ENCODE measurements at regions of chr3 and their contacts with region 1.

Region 1: GRCh38 chr3:11297126-11297525 is 24.9 kb downstream of the ATG7 start:
- DNase-seq: no peak
- H3K4me3 ChIP-seq: no peak overlapping the region
- H3K4me3 Mint-ChIP-seq: no peak overlapping the region
- H3K27ac ChIP-seq: peak overlapping the region in 1 of 2 donors; percentile 52
- H3K27ac Mint-ChIP-seq: peak overlapping the region in 5 of 7 donors; percentile 54 to 78 (median 64)
- H3K4me1 ChIP-seq: peaks cover 4 to 6% of the 10 kb centered on the region in 2 donors
- H3K4me1 Mint-ChIP-seq: peaks cover 17% of the 10 kb centered on the region
- H3K27me3 ChIP-seq: no peaks in the 10 kb centered on the region
- H3K27me3 Mint-ChIP-seq: peaks cover 0 to 3% (median 0%) of the 10 kb centered on the region in 3 donors
- CTCF ChIP-seq: no peak

Region 2: DNA sequence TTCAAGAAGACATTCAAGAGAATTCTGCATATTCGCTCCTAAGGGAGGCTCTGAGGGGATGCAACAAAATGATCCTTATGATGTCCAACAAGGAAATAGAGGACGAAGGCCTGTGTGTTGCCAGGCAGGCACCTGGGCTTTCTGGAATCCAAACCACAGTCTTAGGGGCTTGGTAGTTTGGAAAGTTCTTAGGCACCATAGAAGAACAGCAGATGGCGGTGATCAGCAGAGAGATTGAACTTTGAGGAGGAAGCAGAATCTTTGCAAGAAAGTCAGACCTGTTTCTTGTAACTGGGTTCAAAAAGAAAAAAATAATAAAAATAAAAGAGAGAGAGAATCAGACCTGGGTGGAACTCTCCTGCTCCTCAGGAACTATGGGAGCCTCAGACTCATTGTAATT is 36.7 kb before region 1 on chr3:
- intact Hi-C with region 1: loop called in 1 of 2 experiments (anchors 5 kb)
- DNase-seq: peak in 2 of 3 donors; percentile 14 to 26
- H3K4me3 ChIP-seq: no peak overlapping the region
- H3K4me3 Mint-ChIP-seq: no peak overlapping the region
- H3K27ac ChIP-seq: no peak overlapping the region
- H3K27ac Mint-ChIP-seq: no peak overlapping the region
- H3K4me1 ChIP-seq: no peaks in the 10 kb centered on the region
- H3K4me1 Mint-ChIP-seq: no peaks in the 10 kb centered on the region
- H3K27me3 ChIP-seq: no peaks in the 10 kb centered on the region
- H3K27me3 Mint-ChIP-seq: peaks cover 0 to 6% (median 5%) of the 10 kb centered on the region in 3 donors
- CTCF ChIP-seq: no peak

Measured in CD14-positive monocyte (primary cell).